Activated B cell treated with CpG ODN at 0.5 μM for 24 hours (primary cell): ENCODE measurements at regions of chr10 and their contacts with region 1.

Region 1: GRCh38 chr10:101840741-101841453 is 2.7 kb downstream of the KCNIP2 start:
- DNase-seq: peak; percentile 80
- ATAC-seq: peak; percentile 64
- H3K4me3 Mint-ChIP-seq: peak overlapping the region; percentile 88
- H3K27ac Mint-ChIP-seq: peak overlapping the region; percentile 77
- H3K4me1 Mint-ChIP-seq: peaks cover 60% of the 10 kb centered on the region
- H3K27me3 Mint-ChIP-seq: no peaks in the 10 kb centered on the region
- CTCF ChIP-seq: no peak

Region 2: DNA sequence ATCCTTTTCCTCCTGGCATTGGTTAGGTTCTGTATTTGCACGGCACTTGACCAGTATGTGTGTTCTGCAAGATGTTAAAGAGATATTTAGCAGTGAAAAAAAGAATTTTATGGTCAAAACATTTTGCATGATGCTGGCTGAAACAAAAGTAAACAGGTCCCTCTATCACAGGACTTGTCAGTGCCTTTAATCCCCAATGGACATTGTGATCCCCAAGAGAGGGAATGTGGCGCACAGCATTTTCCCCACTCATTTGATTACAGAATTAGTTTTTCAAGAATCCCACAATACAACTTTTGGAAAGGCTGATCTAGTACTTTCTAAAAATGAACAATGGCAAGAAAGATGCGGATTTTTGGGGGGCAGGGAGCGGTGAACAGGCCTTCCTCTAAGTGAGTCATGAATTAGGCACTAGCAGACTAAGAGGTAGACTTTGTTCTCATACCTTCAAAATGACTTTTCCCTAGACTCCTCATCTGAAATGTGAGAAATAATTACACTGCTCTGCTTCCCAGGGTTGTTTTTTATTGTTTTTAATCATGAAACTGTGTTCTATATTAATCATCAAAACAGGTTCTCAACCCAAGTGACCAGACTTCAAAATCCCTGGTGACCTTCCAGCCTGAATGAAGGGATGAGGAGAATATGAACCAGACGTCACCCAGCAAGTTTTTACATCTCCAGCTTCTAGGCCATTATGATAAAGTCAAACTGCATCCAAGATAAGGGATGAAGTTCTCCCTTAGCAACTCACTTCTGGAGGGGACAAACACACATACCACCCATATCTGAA is 154.6 kb before region 1 on chr10:
- CTCF ChIA-PET with region 1: no interaction called
- POLR2A ChIA-PET with region 1: no interaction called
- intact Hi-C with region 1: no loop called
- DNase-seq: no peak
- ATAC-seq: no peak
- H3K4me3 Mint-ChIP-seq: no peak overlapping the region
- H3K27ac Mint-ChIP-seq: no peak overlapping the region
- H3K4me1 Mint-ChIP-seq: peaks cover 74% of the 10 kb centered on the region
- H3K27me3 Mint-ChIP-seq: no peaks in the 10 kb centered on the region
- CTCF ChIP-seq: no peak

Region 3: DNA sequence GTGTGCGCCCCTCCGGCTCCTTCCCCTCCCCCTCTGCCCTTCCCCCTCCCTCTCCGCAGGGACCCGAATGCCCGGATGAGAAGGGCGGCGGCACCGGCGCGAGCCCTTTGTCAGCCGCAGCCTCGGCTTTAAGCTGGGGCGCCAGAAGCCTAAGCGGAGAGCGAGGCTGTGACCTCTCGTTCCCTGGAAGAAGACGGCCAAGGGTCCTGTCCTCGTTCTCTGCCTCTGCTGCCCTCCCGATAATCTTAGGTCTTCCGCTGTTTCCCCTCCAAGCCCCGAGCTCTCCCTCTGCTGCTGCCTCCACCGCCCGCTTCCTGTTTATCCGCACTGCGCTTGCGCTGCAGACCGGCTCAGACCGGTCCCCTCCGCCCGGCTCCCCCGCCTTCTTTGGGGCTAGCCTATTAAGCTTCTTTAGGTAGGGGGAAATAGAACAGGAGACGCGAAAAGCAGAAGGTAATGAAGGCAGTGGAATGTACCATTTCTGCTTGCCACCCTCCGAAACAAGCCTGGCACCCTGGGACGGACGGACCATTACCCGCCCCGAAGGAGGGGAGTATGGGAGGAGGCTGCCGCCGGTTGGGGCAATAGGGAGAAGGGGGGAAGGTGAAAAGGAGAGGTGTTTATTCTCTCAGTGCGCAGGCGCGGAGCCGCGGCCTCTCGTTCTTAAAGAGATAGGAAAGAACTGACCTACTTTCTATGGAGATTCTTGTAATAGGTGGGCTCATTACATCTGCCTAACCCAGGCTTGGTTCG is 22.6 kb before region 1 on chr10 and contains the start of gene OGA:
- CTCF ChIA-PET with region 1: interaction called, 26 read pairs
- POLR2A ChIA-PET with region 1: interaction called, 50 read pairs
- intact Hi-C with region 1: no loop called
- DNase-seq: peak; percentile 91
- ATAC-seq: peak; percentile 86
- H3K4me3 Mint-ChIP-seq: peak within 1 kb of the TSS; percentile 98
- H3K27ac Mint-ChIP-seq: peak within 1 kb of the TSS; percentile 99
- H3K4me1 Mint-ChIP-seq: peaks cover 42% of the 10 kb centered on the region
- H3K27me3 Mint-ChIP-seq: no peaks in the 10 kb centered on the region
- CTCF ChIP-seq: no peak
- total RNA-seq, gene OGA: 209 and 271 TPM in 2 replicates

Region 4: DNA sequence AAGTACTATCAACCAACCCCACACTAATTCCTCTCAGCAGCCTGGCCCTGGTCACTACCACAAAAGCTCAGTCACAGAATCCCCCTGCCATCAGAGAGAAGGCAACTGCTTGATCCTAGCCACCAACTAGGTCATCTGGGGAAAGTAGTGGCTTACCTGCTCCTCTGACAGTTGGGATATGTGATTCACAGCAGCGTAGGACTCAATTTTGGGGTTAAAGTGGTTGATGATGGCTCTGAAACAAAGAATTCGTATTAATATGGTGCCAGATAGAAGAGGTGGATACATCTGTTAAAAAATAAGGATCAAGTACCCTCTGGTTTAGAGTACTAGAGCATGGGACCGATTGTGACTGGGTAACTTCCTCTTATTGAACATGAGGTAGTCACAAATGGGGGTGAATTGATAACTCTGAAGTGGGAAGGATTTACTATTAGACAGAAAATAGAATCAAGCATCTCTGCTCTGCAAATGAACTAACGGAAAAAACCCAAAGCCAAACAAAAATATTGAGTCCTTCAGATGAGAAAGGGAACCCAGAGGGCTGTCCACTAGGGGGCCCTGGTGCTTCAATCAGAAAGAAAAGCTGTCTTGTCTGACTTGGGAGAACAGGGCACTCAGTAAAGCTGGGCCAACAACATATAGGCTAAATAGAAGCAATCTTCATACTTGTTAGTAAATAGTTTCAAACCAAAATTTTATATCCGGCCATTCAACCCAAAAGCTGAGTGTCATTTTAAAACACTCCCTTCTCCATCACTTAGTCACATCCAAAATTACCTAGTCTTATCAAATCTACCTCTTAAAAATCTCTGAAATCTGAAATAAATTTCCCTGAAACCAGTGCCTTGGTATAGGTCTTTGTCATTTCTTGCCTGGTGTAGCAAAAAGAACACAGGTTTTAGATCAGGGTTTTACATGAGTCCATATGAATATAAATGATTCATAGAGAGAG is 48.6 kb after region 1 on chr10:
- CTCF ChIA-PET with region 1: interaction called, 53 read pairs
- POLR2A ChIA-PET with region 1: interaction called, 4 read pairs
- intact Hi-C with region 1: loop called (anchors 1 kb)
- DNase-seq: peak; percentile 62
- ATAC-seq: peak; percentile 96
- H3K4me3 Mint-ChIP-seq: no peak overlapping the region
- H3K27ac Mint-ChIP-seq: peak overlapping the region; percentile 79
- H3K4me1 Mint-ChIP-seq: peaks cover 41% of the 10 kb centered on the region
- H3K27me3 Mint-ChIP-seq: no peaks in the 10 kb centered on the region
- CTCF ChIP-seq: peak; percentile 62

Region 5: DNA sequence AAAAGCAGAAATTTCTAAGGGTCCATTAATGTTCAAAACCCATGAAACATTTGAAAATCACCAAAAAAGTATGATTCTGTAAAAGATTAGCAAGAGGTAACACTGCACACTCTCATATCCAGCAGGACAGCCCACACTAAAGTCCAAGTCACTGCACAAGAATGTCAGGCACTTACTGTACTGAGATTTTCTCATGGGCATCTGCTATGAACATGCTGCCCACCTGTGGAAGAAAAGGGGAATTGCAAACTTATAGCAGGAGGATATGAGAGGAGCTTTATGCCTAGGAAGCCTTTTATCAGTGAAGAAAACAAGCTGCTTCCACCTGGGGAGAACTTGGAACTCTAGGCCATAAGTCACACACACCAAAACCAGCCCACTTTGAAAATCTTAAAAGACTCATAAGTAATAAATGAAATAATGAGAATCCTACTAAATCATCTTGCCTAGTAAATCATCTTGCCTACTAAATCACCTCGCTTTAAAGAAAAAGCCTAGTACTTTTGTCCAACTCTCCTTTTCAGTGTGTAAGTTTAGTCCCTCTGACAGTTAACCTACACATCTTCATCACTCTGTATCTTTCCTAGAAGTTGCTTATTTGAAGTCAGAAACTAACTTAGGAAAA is 169.0 kb after region 1 on chr10:
- CTCF ChIA-PET with region 1: interaction called, 372 read pairs
- POLR2A ChIA-PET with region 1: interaction called, 100 read pairs
- intact Hi-C with region 1: loop called (anchors 1 kb)
- DNase-seq: no peak
- ATAC-seq: peak; percentile 92
- H3K4me3 Mint-ChIP-seq: no peak overlapping the region
- H3K27ac Mint-ChIP-seq: peak overlapping the region; percentile 72
- H3K4me1 Mint-ChIP-seq: peaks cover 58% of the 10 kb centered on the region
- H3K27me3 Mint-ChIP-seq: no peaks in the 10 kb centered on the region
- CTCF ChIP-seq: no peak

Region 6: DNA sequence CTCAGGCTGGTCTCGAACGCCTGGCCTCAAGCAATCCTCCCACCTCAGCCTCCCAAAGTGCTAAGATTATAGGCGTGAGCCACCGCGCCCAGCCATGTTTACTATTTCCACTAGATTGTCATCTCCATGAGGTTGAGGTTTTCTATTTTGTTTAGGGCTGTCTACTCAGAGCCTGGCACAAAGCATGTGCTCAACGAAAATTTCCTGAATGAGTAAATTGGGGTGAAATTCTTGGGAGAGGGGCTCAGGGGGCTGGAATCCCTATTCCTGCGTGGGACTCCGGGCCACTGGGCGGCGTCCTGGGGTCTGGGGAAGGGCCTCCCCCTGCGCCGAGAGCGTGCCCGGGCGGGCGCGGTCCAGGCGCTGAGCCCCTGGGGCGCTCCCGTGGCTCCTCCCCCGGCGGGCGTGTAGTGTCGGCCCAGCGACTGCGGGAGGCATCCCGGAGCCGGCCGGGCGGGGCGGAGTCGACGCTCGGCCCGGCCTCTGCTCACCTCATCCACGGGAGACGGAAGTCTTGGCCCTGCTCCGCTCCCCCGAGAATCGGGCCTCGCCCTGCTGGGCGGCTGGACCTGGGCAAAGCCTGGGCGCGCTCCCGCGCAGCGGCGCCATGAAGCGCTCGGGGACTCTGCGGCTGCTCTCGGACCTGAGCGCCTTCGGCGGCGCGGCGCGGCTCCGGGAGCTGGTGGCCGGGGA is 224.1 kb after region 1 on chr10 and contains the start of gene HPS6:
- CTCF ChIA-PET with region 1: interaction called, 182 read pairs
- POLR2A ChIA-PET with region 1: interaction called, 22 read pairs
- intact Hi-C with region 1: loop called (anchors 2 kb)
- DNase-seq: peak; percentile 88
- ATAC-seq: peak; percentile 97
- H3K4me3 Mint-ChIP-seq: peak within 1 kb of the TSS; percentile 89
- H3K27ac Mint-ChIP-seq: peak within 1 kb of the TSS; percentile 90
- H3K4me1 Mint-ChIP-seq: peaks cover 24% of the 10 kb centered on the region
- H3K27me3 Mint-ChIP-seq: no peaks in the 10 kb centered on the region
- CTCF ChIP-seq: no peak
- total RNA-seq, gene HPS6: 22.8 and 23.0 TPM in 2 replicates